Heart right ventricle (tissue), 16 donors: ENCODE measurements at regions of chr1 and their contacts with region 1.

Region 1: DNA sequence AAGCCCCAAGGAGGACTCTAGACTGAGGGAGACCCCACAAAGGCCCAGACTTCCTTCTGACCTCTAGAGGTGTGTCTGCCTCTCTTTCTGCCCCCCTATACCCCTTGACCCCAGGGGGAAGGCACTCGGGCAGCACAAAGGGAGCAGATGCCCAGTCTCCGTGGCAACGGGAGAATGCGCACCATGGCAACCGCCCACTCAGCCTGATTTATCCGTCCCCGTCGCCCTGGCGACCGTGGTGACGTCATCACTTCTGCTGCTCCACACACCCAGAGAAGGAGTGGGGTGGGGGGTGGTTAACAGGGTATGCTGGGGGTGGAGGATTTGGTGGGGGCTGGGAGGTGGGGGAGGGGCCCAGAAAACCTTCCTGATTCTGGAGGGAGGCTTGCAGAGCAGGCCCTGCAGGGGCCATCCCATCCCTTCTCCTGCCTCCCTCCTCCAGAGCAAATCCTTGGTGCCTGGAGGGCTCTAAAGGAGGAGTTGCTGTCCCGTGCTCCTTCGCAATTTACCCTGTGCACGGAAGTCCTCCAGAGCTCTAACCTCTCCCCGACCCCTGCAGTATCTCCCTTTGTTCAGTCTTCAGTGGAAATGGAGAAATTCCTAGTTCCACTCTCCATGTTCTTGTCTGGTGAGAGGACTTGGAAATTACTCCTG is 6.3 kb downstream of the CELF3 start:
- DNase-seq: no peak
- ATAC-seq: no peak
- H3K4me3 ChIP-seq: no peak overlapping the region
- H3K27ac ChIP-seq: no peak overlapping the region
- H3K4me1 ChIP-seq: no peaks in the 10 kb centered on the region
- H3K27me3 ChIP-seq: peaks cover 0 to 32% (median 9%) of the 10 kb centered on the region in 7 donors
- CTCF ChIP-seq: no peak

Region 2: GRCh38 chr1:151653397-151653796 is 56.9 kb before region 1 on chr1:
- intact Hi-C with region 1: loop called in 1 of 10 experiments (anchors 10 kb)
- DNase-seq: no peak
- ATAC-seq: no peak
- H3K4me3 ChIP-seq: no peak overlapping the region
- H3K27ac ChIP-seq: peak overlapping the region in 2 of 10 donors; percentile 1 to 85
- H3K4me1 ChIP-seq: peaks cover 0 to 35% (median 6%) of the 10 kb centered on the region in 9 donors
- H3K27me3 ChIP-seq: no peaks in the 10 kb centered on the region
- CTCF ChIP-seq: no peak